CD4-positive, alpha-beta memory T cell (primary cell): ENCODE measurements at regions of chr6 and their contacts with region 1.

Region 1: DNA sequence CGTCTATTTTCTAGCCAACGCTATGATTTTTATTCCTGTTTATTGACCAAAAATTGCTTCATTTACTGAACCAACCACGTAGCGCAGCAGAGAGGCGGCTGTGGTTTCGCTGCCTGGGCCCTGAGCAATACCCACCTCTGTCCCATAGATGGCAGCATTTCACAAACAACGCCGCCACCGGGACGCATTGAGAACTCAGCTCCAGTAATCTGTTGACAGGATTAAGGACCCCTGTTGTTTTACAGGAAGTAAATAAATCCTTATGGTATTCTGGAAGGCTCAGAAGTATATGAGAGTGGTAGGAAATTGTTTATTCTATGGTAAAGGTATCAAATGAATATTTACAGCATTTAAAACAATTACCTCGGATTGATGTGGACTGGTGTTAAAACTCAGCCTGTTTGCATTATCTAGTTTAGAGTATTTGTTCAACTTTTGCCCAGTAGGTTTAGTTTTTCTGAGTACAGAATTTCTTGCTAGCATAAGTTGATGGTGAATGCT is 547.9 kb upstream of the SLC35B3 start:
- DNase-seq: peak in 4 of 5 donors; percentile 29 to 39 (median 34)
- H3K4me3 ChIP-seq: no peak overlapping the region
- H3K4me3 Mint-ChIP-seq: peak overlapping the region in 1 of 8 donors; percentile 32
- H3K27ac ChIP-seq: no peak overlapping the region
- H3K27ac Mint-ChIP-seq: no peak overlapping the region
- H3K4me1 ChIP-seq: no peaks in the 10 kb centered on the region
- H3K4me1 Mint-ChIP-seq: no peaks in the 10 kb centered on the region
- H3K27me3 ChIP-seq: no peaks in the 10 kb centered on the region
- H3K27me3 Mint-ChIP-seq: peaks cover 1 to 4% of the 10 kb centered on the region in 2 donors

Region 2: DNA sequence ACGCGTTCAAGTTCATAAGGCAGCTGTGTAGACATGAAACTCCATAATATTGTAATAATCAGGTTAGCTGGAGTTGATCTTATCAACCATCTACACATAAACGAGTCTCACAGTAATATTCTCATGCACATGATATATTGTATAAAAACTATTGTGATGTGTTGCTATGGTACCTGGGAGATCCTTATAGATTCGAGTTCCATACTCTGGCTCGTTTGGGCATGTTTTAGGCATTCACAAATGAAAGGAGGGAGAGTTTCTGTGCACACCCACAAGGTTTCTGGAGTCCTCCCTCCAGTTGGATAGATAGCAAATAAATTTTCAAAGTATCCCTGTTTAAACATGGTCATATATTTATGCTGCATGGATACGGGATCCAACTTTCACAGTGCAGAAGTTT is 19.6 kb after region 1 on chr6:
- CTCF ChIA-PET with region 1: no interaction called
- POLR2A ChIA-PET with region 1: no interaction called
- intact Hi-C with region 1: no loop called
- DNase-seq: no peak
- H3K4me3 ChIP-seq: no peak overlapping the region
- H3K4me3 Mint-ChIP-seq: no peak overlapping the region
- H3K27ac ChIP-seq: no peak overlapping the region
- H3K27ac Mint-ChIP-seq: no peak overlapping the region
- H3K4me1 ChIP-seq: no peaks in the 10 kb centered on the region
- H3K4me1 Mint-ChIP-seq: no peaks in the 10 kb centered on the region
- H3K27me3 ChIP-seq: no peaks in the 10 kb centered on the region
- H3K27me3 Mint-ChIP-seq: peaks cover 0 to under 1% of the 10 kb centered on the region in 2 donors

Region 3: DNA sequence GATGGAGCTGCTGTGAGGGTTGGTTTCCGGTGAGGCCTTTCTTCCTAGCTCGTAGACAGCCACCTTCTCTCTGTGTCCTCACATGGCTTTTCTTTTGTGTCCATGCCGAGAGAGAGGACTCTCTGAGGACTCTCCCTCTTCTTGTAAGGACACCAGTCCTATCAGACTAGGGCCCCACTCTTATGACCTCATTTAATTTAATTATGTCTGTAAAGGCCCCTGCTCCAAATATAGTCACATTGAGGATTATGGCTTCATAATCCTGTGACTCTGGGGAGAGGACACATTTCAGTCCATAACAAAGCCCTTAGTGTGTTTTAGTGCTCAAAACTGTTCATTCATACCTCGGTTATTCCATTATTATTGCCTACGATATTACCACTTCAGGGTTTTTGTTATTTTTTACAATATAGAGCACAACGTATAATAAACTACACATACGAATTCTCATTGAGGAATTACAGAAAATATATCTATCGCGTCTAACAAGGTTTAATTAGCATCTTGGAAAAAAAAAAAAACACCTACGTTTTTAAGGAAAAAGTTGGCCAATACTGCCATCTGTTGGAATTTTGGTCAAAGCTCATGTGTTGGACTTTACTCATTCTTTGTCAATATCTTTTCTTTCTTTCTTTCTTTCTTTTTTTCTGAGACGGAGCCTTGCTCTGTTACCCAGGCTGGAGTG is 1451.6 kb after region 1 on chr6:
- CTCF ChIA-PET with region 1: interaction called, 19 read pairs
- POLR2A ChIA-PET with region 1: no interaction called
- intact Hi-C with region 1: loop called (anchors 1 kb)
- DNase-seq: no peak
- H3K4me3 ChIP-seq: no peak overlapping the region
- H3K4me3 Mint-ChIP-seq: no peak overlapping the region
- H3K27ac ChIP-seq: no peak overlapping the region
- H3K27ac Mint-ChIP-seq: no peak overlapping the region
- H3K4me1 ChIP-seq: peaks cover 5% of the 10 kb centered on the region
- H3K4me1 Mint-ChIP-seq: peaks cover 0 to 9% (median 5%) of the 10 kb centered on the region in 4 donors
- H3K27me3 ChIP-seq: no peaks in the 10 kb centered on the region
- H3K27me3 Mint-ChIP-seq: peaks cover 8 to 23% of the 10 kb centered on the region in 2 donors